ENCODE measurements at regions of chr15 and their contacts with region 1.

Region 1: DNA sequence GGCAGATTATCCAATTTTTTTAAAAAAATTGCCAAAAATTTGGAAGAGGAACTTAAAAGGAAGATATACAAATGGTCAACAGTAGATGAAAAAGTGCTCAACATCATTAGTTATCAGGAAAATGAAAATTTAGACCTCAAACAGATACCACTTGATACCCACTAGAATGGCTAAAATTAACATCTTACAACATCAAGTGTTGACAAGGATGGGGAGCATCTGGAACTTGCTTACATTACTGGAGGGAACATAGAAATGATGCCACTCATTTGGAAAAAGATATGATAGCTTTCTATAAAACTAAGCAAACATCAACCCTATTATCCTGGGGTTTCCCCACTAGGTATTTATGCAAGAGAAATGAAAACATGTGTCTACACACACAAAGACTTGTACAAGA is 284.5 kb upstream of the CHRNA7 start:
- DNase-seq: no peak
- ATAC-seq: no peak
- H3K4me3 ChIP-seq: no peak overlapping the region
- H3K27ac ChIP-seq: no peak overlapping the region
- H3K4me1 ChIP-seq: no peaks in the 10 kb centered on the region
- H3K27me3 ChIP-seq: no peaks in the 10 kb centered on the region
- CTCF ChIP-seq: no peak

Region 2: GRCh38 chr15:31824024-31824423 is 78.2 kb after region 1 on chr15:
- intact Hi-C with region 1: loop called in 2 of 10 experiments (anchors 5 to 10 kb)
- DNase-seq: no peak
- ATAC-seq: no peak
- H3K4me3 ChIP-seq: no peak overlapping the region
- H3K27ac ChIP-seq: no peak overlapping the region
- H3K4me1 ChIP-seq: peaks cover 0 to 6% (median 0%) of the 10 kb centered on the region in 9 donors
- H3K27me3 ChIP-seq: no peaks in the 10 kb centered on the region
- CTCF ChIP-seq: no peak